Calu3 (cell line): ENCODE measurements at regions of chr11 and their contacts with region 1.

Region 1: DNA sequence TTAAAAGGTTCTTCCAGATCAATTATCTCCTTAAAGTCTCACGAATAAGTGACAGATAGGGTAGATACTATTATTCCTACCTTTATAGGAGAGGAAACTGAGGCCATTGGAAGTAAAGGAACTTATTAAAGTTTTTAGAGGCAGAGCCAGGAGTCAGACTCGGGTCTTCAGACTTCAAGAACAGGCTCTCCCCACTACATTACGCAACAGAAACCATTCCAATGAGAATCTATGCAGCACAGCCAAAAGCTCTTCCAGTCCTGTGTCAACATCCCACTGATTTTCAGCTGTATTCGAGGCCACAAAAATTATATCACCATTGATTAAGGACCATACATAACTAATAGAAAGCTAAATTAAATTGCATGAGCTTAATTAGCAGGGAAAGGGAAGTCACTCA is 77.4 kb downstream of the RELT start:
- DNase-seq: no peak
- H3K4me3 Mint-ChIP-seq: no peak overlapping the region
- H3K27ac Mint-ChIP-seq: no peak overlapping the region
- H3K4me1 Mint-ChIP-seq: no peaks in the 10 kb centered on the region
- H3K27me3 Mint-ChIP-seq: no peaks in the 10 kb centered on the region
- CTCF ChIP-seq: no peak

Region 2: DNA sequence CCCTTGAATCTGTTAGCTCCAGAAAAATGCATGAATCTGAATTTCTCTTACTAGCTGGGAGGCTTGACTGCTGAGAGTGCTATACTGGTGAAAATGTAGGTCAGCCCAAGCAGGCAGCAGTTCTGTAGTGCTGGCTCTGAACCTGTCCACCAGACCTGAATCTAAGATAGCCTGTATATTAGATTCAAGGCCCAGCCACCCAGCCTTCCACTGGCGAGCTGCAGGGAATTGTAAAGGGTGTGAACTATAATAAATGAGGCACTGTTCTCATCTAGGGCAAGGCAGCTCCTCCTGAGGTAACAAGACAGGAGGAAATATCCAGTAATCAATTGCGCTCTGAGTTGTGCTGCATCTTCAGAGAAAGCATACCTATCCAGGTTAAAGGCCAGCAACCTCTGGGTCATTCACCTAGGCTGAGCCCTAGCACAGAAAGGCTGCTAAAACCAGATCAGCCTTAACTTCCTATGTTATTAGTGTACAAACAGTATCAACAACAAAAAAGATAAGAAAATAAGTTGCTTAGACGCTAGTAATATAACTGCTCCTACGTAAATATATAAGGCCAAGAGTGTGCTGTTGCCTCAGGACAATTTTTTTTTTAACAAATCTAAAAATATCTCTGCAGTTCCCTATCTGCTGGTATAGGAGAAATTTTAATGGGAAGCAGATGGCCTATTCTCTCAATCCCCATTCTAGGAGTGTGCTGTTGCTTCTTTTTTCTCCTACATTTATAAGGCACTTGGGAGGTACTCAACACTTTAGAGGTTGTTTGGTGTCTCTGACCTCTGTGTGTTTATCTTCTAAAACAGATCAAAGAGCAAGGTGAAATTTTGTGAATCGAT is 14.3 kb before region 1 on chr11:
- CTCF ChIA-PET with region 1: no interaction called
- intact Hi-C with region 1: no loop called
- DNase-seq: no peak
- H3K4me3 Mint-ChIP-seq: no peak overlapping the region
- H3K27ac Mint-ChIP-seq: no peak overlapping the region
- H3K4me1 Mint-ChIP-seq: no peaks in the 10 kb centered on the region
- H3K27me3 Mint-ChIP-seq: no peaks in the 10 kb centered on the region
- CTCF ChIP-seq: no peak

Region 3: DNA sequence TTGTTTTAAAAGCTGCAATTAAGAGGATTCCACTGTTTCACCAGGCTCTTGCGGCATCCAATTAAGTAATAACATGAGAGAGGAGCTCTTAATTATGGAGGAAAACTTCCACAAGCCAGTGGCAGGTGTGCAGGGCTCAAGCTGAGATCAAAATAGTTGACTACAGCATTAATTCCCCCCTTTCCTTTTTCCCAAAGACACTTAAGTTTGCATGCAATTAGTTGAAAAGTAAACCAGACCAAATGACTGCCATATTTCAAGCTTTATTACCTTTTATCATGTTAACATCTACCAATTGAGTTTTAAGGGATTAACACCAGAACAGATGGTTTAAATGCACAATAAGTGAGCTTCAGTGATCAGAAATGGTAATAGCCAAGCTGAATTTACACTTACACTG is 112.2 kb after region 1 on chr11:
- CTCF ChIA-PET with region 1: interaction called, 19 read pairs
- intact Hi-C with region 1: no loop called
- DNase-seq: no peak
- H3K4me3 Mint-ChIP-seq: no peak overlapping the region
- H3K27ac Mint-ChIP-seq: no peak overlapping the region
- H3K4me1 Mint-ChIP-seq: peaks cover 16% of the 10 kb centered on the region
- H3K27me3 Mint-ChIP-seq: no peaks in the 10 kb centered on the region
- CTCF ChIP-seq: no peak